ENCODE measurements at regions of chr10 and their contacts with region 1.

Region 1: GRCh38 chr10:77970869-77971803 is 44.6 kb upstream of the DLG5 start:
- DNase-seq: peak; percentile 76 to 91
- H3K4me3 ChIP-seq: no peak overlapping the region
- CTCF ChIP-seq: no peak
- POLR2A ChIP-seq: no peak

Region 2: DNA sequence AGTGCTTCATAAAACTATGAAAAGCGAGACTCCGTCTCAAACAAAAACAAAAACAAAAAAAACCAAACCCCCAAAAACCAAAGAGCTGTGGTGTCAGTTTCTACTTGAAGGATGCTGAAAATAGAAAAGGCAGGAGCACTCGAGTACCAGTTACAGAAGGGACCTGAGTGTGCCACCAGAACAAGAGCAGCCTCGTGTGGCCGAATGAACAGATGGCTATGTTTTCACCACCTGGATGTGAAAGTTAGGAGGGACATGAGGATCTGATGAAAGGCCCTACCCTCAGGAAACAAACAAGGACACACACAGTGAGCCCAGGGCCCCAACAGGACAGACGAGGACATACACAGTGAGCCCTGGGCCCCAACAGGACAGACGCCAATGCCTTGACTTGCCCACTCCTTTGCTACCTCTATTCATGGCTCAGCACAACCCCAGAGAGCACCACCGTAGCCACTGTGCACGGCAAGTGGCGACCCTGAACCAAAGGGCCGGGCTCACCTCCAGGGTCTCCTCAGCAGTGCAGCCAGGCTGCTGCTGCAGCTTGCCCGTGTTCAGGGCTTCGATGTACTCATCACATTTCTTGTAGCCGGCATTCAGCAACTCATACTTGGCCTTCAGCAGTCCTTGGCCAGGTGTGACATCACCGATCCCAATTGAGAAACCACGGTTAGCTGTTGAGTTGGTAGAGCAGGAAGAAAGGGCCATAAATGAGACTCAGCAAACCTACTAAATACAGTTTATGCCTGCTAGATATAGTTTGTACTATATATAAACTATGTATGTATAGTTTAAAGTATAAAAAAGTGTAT is 33.3 kb after region 1 on chr10:
- intact Hi-C with region 1: no loop called
- DNase-seq: peak in 1 of 2 donors; percentile 45
- H3K4me3 ChIP-seq: no peak overlapping the region
- CTCF ChIP-seq: no peak
- POLR2A ChIP-seq: no peak

Region 3: GRCh38 chr10:78768041-78768835 is 797.1 kb after region 1 on chr10:
- intact Hi-C with region 1: loop called (anchors 5 kb)
- DNase-seq: peak in 1 of 2 donors; percentile 71
- H3K4me3 ChIP-seq: no peak overlapping the region
- CTCF ChIP-seq: no peak
- POLR2A ChIP-seq: no peak